Right ventricle myocardium inferior (tissue), 1 donor: ENCODE measurements at regions of chr13 and their contacts with region 1.

Region 1: GRCh38 chr13:23510979-23511735 is 59.1 kb upstream of the TNFRSF19 start:
- DNase-seq: no peak
- ATAC-seq: peak; percentile 47

Region 2: DNA sequence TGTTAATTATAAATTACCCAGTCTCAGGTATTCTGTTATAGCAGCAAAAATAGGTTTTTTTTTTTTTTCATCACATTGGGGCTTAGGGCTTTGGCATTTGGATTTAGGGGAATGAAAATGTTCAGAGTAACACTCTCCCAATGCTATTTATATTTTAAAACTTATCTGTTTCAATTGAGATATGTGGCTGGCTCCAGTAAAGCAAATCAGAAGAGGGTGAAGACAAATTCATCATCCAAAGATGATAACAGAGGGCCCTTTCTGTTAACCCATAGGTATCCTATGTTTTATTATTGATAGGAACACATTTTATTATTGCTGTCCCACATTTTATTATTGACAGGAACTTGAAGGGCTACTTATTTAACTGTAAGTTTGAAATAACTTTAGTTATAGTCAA is 38.6 kb after region 1 on chr13:
- intact Hi-C with region 1: loop called (anchors 2 kb)
- DNase-seq: no peak
- ATAC-seq: peak; percentile 53

Region 3: DNA sequence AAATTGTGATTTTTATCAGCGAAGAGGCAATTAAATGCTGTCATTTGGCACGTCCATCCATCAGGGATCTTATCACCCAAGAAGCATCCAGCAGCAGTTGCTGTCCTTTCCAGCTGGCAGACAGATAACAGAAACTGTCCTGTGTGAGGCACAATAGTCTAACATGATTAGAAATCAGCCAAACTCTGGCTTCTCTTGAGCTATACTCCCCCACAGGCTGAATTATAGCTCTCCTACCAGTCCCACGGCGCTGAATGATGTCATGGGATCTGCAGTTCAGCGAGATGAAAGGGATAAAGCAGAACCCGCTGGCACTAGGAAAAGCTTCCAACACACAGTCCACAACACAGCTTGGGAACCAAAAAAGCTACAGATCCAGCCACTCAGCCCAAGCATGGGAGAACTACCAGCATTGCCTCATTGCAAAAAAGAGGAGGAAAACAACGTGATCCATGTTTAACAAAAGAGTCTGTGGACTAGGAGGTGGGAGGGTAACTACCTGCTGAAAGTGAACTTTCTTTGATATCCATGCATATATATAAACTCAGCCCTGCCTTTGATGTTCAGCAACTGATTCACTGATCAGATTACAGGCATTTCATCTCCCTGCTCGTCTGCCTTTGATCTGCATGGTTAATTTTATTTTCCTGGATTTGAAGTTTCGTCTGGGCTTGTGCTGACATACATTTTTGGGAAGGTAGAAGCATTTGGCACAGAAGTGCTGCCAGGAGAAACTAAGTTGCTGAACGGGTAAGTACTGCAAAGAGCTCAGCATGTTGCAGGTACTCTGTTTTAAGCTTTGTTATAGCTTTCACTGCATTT is 59.2 kb after region 1 on chr13 and contains the start of gene TNFRSF19:
- intact Hi-C with region 1: loop called (anchors 2 kb)
- DNase-seq: no peak
- ATAC-seq: peak; percentile 94
- total RNA-seq, gene TNFRSF19: 36.5 TPM

Region 4: DNA sequence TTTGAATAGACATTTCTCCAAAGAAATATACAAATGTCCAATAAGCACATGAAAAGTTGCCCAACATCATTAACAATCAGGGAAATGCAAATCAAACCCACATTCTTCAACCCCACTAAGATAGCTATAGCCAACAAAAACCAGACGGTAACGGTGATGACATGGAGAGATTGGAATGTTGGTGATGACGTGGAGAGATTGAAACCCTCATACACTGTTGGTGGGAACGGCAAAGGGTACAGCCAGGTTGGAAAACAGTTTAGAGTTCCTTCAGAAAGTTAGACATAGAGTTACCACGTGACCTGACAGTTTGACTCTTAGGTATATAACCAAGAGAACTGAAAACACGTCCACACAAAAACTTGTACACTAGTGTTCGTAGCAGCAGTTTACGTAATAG is 107.2 kb after region 1 on chr13:
- intact Hi-C with region 1: no loop called
- DNase-seq: no peak
- ATAC-seq: peak; percentile 51